Mammary epithelial cell (primary cell): ENCODE measurements at regions of chr7 and their contacts with region 1.

Region 1: GRCh38 chr7:141654551-141654950 is 47.4 kb downstream of the DENND11 start:
- DNase-seq: peak; percentile 55
- H3K4me3 ChIP-seq: no peak overlapping the region
- H3K27ac ChIP-seq: no peak overlapping the region
- H3K4me1 ChIP-seq: no peaks in the 10 kb centered on the region
- H3K27me3 ChIP-seq: no peaks in the 10 kb centered on the region
- CTCF ChIP-seq: peak; percentile 72 to 89

Region 2: DNA sequence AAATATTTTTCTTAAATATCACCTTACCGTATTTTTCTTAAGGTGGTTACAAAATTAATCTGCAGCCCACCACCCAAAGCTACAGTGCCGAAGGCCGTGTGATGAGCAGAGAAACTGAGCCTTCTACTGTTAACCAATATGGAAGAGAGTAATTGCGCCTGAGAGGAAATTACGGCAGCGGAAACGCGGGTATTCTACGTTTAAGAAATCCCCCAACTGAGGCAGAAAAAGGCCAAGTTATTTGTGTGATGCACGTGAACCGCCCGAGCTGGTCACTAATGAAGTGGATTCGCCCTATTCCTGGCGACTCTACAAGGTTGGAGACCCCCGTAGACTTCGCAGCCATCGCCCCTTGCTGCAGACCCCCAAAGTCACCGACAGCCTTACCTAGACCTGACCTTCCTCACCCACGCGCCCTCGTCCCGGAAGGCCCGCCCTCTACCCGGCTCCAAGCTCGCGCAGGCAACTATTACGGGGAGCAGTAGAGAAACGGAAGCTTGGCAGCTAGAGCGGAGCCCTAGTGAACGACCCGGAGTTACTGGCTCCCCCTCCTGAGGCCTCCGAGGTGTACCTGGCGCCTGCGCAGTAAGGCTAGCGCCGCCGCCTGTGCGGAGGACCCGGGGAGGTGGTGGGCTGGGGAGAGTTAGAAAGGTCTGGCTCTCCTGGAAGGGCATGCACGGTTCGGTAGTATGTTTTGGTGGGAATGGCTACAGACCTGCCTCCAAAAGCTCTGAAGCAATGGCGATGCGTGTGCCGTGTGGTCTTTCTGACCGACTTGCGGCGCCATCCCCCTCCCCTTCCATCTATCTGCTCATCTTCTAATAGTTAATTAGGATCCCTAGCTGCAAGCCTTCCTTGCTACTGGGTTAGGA is 639.8 kb before region 1 on chr7 and contains the start of gene MRPS33:
- CTCF ChIA-PET with region 1: no interaction called
- dilution Hi-C with region 1: no loop called
- in situ Hi-C with region 1: no loop called
- intact Hi-C with region 1: loop called (anchors 1 kb)
- DNase-seq: peak; percentile 92
- H3K4me3 ChIP-seq: peak within 1 kb of the TSS; percentile 69 to 90 (median 88)
- H3K27ac ChIP-seq: peak within 1 kb of the TSS; percentile 97
- H3K4me1 ChIP-seq: peaks cover 10% of the 10 kb centered on the region
- H3K27me3 ChIP-seq: no peaks in the 10 kb centered on the region
- CTCF ChIP-seq: peak; percentile 43 to 68
- total RNA-seq, gene MRPS33: 17.8 to 67.7 TPM

Region 3: GRCh38 chr7:141251957-141252356 is 402.6 kb before region 1 on chr7:
- CTCF ChIA-PET with region 1: no interaction called
- dilution Hi-C with region 1: no loop called
- in situ Hi-C with region 1: loop called in 1 of 2 experiments (anchors 25 kb)
- intact Hi-C with region 1: loop called (anchors 5 kb)
- DNase-seq: no peak
- H3K4me3 ChIP-seq: no peak overlapping the region
- H3K27ac ChIP-seq: no peak overlapping the region
- H3K4me1 ChIP-seq: no peaks in the 10 kb centered on the region
- H3K27me3 ChIP-seq: peaks cover 3% of the 10 kb centered on the region
- CTCF ChIP-seq: peak in 1 of 2 donors; percentile 21

Region 4: DNA sequence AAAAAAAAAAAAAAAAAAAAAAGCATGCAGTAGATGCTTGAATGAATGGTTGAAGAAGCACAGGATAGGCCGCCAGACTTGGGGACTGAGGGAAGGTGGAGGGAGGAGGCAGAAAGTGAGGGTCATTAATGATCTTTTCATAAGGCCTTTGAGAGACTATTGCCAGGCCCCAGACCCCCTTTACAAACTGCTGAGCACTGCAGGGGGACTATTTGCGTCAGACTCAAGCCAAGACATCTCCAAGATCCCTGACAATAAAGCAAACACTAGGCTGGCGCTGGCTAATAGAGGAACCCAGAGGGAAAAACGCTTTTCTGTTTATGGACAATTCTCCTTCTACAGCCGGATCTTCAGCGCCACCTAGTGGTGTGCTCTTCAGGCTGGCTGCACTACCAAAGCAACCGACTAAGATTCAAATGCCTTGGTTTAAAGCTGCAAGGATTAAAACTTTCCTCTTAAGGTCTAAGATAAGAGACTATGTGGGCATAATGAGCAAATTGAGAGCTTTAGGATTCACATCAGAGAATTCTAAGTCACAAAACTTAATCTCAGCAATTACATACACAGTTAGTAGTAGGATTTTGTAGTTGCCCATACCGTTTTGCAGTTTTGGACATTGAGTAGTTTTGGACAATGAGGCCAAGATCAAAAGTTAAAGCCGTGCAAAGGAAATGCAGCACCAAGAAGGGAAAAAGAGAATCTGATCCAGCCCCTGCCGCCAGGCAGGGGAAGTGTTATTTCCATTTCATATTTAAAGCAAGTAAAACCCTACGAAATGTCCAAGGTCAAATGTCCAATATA is 121.2 kb before region 1 on chr7:
- CTCF ChIA-PET with region 1: no interaction called
- dilution Hi-C with region 1: no loop called
- in situ Hi-C with region 1: no loop called
- intact Hi-C with region 1: loop called (anchors 1 kb)
- DNase-seq: peak; percentile 38
- H3K4me3 ChIP-seq: no peak overlapping the region
- H3K27ac ChIP-seq: no peak overlapping the region
- H3K4me1 ChIP-seq: no peaks in the 10 kb centered on the region
- H3K27me3 ChIP-seq: no peaks in the 10 kb centered on the region
- CTCF ChIP-seq: peak; percentile 94 to 99

Region 5: GRCh38 chr7:141731476-141732149 is 77.1 kb after region 1 on chr7:
- CTCF ChIA-PET with region 1: interaction called, 4 read pairs
- dilution Hi-C with region 1: no loop called
- in situ Hi-C with region 1: no loop called
- intact Hi-C with region 1: loop called (anchors 1 kb)
- DNase-seq: no peak
- H3K4me3 ChIP-seq: no peak overlapping the region
- H3K27ac ChIP-seq: no peak overlapping the region
- H3K4me1 ChIP-seq: no peaks in the 10 kb centered on the region
- H3K27me3 ChIP-seq: no peaks in the 10 kb centered on the region
- CTCF ChIP-seq: no peak

Region 6: DNA sequence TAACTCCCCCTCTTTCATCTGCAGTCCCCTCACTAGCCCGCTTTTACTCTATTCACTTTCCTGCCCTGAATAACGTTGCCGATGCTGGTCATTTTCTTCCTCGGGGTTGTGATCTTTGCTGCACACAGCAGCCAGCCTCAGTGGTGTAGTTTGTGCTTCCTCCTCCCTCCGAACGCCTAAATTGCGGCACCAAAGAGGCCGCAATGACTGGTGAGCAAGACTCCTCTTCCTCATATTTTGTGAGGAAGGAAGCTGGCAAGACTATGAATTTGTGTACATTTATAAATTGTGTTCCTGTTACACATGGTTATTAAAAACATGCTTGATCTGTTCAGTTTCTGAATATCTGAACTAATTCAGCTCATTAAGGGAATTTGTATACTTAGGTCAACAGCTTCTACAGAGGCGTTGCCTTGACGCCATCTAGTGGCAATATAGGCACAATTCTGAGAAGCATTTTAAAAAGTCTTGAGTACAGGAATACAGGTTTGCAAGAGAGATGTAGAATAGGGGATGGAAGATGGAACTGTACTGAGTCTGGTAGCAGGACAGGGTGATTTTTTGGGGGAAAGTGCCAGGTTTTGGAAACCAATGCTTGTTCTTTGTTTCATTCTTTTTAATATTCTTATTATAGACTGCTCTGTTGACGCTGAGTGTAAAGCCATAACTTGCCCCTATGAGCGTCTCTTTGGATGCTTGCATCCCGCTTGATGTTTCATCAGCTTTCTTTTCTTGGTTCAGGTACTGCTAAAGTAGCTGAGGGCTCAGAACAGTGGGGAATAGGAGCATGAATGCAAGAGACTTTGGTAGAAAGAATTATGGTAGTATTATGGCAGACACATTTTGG is 131.4 kb after region 1 on chr7:
- CTCF ChIA-PET with region 1: interaction called, 4 read pairs
- dilution Hi-C with region 1: no loop called
- in situ Hi-C with region 1: no loop called
- intact Hi-C with region 1: loop called (anchors 1 kb)
- DNase-seq: peak; percentile 39
- H3K4me3 ChIP-seq: no peak overlapping the region
- H3K27ac ChIP-seq: no peak overlapping the region
- H3K4me1 ChIP-seq: no peaks in the 10 kb centered on the region
- H3K27me3 ChIP-seq: no peaks in the 10 kb centered on the region
- CTCF ChIP-seq: peak; percentile 77 to 95

Region 7: DNA sequence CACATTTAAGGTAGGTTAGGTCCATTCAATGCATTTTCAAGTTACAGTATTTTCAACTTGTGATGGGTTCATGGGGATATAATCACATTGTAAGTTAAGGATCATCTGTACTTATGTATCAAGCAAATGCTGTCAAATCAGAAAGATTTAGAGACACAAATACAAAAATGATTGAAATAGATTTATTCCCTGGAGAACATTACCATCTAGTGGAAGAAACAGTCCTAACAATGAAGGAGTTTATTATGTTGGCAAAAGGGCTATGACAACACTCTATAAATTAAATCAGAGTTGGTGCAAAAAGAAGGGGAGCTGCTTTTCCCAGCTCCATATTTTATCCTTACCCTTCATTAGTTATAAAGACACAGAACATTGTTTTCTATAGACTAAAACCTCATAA is 534.3 kb after region 1 on chr7:
- CTCF ChIA-PET with region 1: no interaction called
- dilution Hi-C with region 1: no loop called
- in situ Hi-C with region 1: no loop called
- intact Hi-C with region 1: loop called (anchors 2 kb)
- DNase-seq: peak; percentile 16
- H3K4me3 ChIP-seq: no peak overlapping the region
- H3K27ac ChIP-seq: no peak overlapping the region
- H3K4me1 ChIP-seq: no peaks in the 10 kb centered on the region
- H3K27me3 ChIP-seq: no peaks in the 10 kb centered on the region
- CTCF ChIP-seq: peak; percentile 27 to 53

Region 8: GRCh38 chr7:142496545-142497041 is 842.0 kb after region 1 on chr7:
- CTCF ChIA-PET with region 1: no interaction called
- dilution Hi-C with region 1: no loop called
- in situ Hi-C with region 1: no loop called
- intact Hi-C with region 1: no loop called
- DNase-seq: peak; percentile 46
- H3K4me3 ChIP-seq: no peak overlapping the region
- H3K27ac ChIP-seq: no peak overlapping the region
- H3K4me1 ChIP-seq: peaks cover 22% of the 10 kb centered on the region
- H3K27me3 ChIP-seq: no peaks in the 10 kb centered on the region
- CTCF ChIP-seq: peak; percentile 67 to 74